ENCODE measurements at regions of chr17 and their contacts with region 1.

Region 1: DNA sequence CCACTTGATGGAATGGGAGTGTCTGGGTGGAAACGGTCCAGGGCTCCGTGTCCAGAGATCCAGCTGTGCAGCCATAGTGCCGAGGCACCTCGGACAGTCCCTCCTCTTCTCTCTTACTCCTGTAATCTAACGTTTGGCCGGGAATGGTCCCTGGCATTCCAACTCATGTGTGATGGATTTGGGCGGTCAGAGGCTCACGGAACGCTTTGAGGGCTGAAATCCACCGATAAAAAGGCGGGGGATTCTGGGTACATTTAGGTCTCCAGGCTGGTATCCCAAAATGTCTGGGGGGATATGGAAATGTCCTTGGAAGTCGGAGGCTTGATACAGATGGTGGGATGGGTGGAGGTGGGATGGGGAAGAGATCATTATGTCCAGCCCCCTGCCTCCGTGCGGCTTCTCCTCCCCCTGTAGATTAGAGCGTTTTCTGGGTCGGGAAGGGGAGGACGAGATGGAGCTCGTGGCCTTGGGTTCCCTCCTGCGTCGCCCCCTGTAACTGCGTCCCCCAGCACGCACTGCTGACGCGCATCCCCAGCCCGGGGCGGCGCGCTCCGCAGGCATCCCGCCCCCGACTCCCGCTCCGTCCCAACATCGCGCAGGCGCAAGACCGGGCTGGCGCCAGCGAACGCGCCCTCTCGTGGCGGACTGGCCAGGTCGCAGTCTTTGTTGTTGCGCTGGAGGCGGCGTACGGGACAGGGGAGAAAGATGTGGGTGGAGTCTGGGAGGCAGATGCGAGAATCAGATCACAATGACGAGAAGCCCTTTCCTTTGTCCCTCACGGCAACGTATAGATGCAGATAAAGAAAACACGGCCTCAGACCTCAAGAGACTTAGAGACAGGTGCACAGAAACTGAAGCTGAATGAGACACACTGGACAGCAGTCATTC is 4.5 kb upstream of the SGCA start:
- DNase-seq: peak in 1 of 2 experiments; percentile 99
- H3K4me3 ChIP-seq: peak overlapping the region; percentile 28 to 62 (median 40)
- H3K27ac ChIP-seq: no peak overlapping the region
- H3K4me1 ChIP-seq: peaks cover 0 to 7% (median 6%) of the 10 kb centered on the region in 4 experiments; a peak in 3 of 7 replicates
- H3K27me3 ChIP-seq: peaks cover 0 to 6% (median 0%) of the 10 kb centered on the region in 4 experiments; a peak in 2 of 7 replicates
- CTCF ChIP-seq: peak; percentile 89 to 99 (median 97)
- EP300 ChIP-seq: no peak
- POLR2A ChIP-seq: peak in 1 of 2 experiments; percentile 55; a peak in 1 of 3 replicates
- RAD21 ChIP-seq: peak; percentile 56 to 72

Region 2: GRCh38 chr17:49987681-49988441 is 173.4 kb before region 1 on chr17:
- CTCF ChIA-PET with region 1: no interaction called
- POLR2A ChIA-PET with region 1: no interaction called
- DNase-seq: peak in 1 of 2 experiments; percentile 51
- H3K4me3 ChIP-seq: peak overlapping the region in 1 of 4 experiments; percentile 24; a peak in 1 of 8 replicates
- H3K27ac ChIP-seq: no peak overlapping the region
- H3K4me1 ChIP-seq: peaks cover 1 to 17% (median 13%) of the 10 kb centered on the region in 4 experiments
- H3K27me3 ChIP-seq: peaks cover 31 to 71% (median 65%) of the 10 kb centered on the region in 4 experiments
- CTCF ChIP-seq: no peak
- EP300 ChIP-seq: no peak
- POLR2A ChIP-seq: no peak
- RAD21 ChIP-seq: no peak

Region 3: GRCh38 chr17:50123649-50124349 is 37.5 kb before region 1 on chr17:
- CTCF ChIA-PET with region 1: interaction called, 299 read pairs
- POLR2A ChIA-PET with region 1: interaction called, 3 read pairs
- DNase-seq: no peak
- H3K4me3 ChIP-seq: 0 out of 8 replicates have a peak overlapping the region, but pooled peaks of 1 of the 4 experiments have one; percentile 3
- H3K27ac ChIP-seq: peak overlapping the region; percentile 37
- H3K4me1 ChIP-seq: peaks cover 5 to 24% (median 19%) of the 10 kb centered on the region in 4 experiments
- H3K27me3 ChIP-seq: peaks cover 0 to 11% (median 3%) of the 10 kb centered on the region in 4 experiments; a peak in 5 of 7 replicates
- CTCF ChIP-seq: no peak
- EP300 ChIP-seq: no peak
- POLR2A ChIP-seq: no peak
- RAD21 ChIP-seq: no peak

Region 4: GRCh38 chr17:50139950-50140871 is 21.1 kb before region 1 on chr17:
- CTCF ChIA-PET with region 1: interaction called, 299 read pairs
- POLR2A ChIA-PET with region 1: interaction called, 4 read pairs
- DNase-seq: peak; percentile 72 to 96
- H3K4me3 ChIP-seq: no peak overlapping the region
- H3K27ac ChIP-seq: no peak overlapping the region; the same call in 1 of the 2 replicates
- H3K4me1 ChIP-seq: peaks cover 0 to 7% (median 0%) of the 10 kb centered on the region in 4 experiments; a peak in 1 of 7 replicates
- H3K27me3 ChIP-seq: no peaks in the 10 kb centered on the region
- CTCF ChIP-seq: peak; percentile 87 to 98 (median 95)
- EP300 ChIP-seq: peak in 1 of 2 experiments; percentile 18; a peak in 1 of 3 replicates
- POLR2A ChIP-seq: no peak
- RAD21 ChIP-seq: peak; percentile 68 to 71

Region 5: GRCh38 chr17:50194934-50195865 is 33.9 kb after region 1 on chr17:
- CTCF ChIA-PET with region 1: interaction called, 19 read pairs
- POLR2A ChIA-PET with region 1: interaction called, 3 read pairs
- DNase-seq: no peak
- H3K4me3 ChIP-seq: no peak overlapping the region
- H3K27ac ChIP-seq: no peak overlapping the region
- H3K4me1 ChIP-seq: peaks cover 0 to 2% (median 0%) of the 10 kb centered on the region in 4 experiments; a peak in 1 of 7 replicates
- H3K27me3 ChIP-seq: no peaks in the 10 kb centered on the region
- CTCF ChIP-seq: peak; percentile 32 to 38 (median 33); a peak in 3 of 4 replicates
- EP300 ChIP-seq: no peak
- POLR2A ChIP-seq: no peak
- RAD21 ChIP-seq: peak in 1 of 2 experiments; percentile 12; a peak in 1 of 4 replicates